ENCODE measurements at regions of chr11 and their contacts with region 1.

Region 1: GRCh38 chr11:44538375-44539054 is 26.9 kb upstream of the CD82 start:
- DNase-seq: peak; percentile 42 to 91 (median 80)

Region 2: GRCh38 chr11:44286268-44286880 is 252.1 kb before region 1 on chr11:
- intact Hi-C with region 1: loop called (anchors 2 kb)
- DNase-seq: peak in 38 of 42 donors; percentile 9 to 76 (median 51)

Measured in head of caudate nucleus (tissue), 42 donors.